Psoas muscle (tissue), 8 donors: ENCODE measurements at regions of chr4 and their contacts with region 1.

Region 1: GRCh38 chr4:146095091-146095690 is 80.3 kb upstream of the LSM6 start:
- DNase-seq: no peak
- ATAC-seq: no peak
- H3K4me3 ChIP-seq: no peak overlapping the region
- H3K27ac ChIP-seq: no peak overlapping the region
- H3K4me1 ChIP-seq: no peaks in the 10 kb centered on the region
- H3K27me3 ChIP-seq: no peaks in the 10 kb centered on the region
- CTCF ChIP-seq: peak; percentile 60

Region 2: DNA sequence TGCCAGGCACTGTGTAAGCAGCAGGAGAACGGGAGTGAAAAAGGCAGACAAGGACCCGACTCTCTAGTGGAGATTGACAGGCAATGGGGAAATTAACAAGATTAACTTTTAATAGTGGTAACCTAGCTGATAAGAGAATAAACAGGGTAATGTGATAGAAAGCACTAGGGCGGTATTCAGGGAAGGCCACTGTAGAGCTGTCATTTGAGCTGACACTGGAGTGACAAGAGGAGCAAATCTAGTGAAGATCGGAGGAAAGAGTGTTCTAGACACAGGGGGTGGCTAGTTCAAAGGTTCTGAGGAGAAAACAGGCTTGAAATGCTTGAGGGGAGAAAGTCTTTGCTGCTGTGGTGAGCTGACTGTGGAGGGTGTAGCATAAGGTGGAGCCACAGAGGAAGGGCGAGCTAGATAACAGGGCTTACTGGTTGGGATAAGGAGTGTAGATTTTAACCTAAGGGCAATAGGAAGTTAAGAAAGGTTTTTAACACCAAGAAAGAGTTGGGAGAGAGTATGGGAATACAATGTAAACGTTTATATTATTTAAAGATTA is 303.8 kb after region 1 on chr4:
- intact Hi-C with region 1: no loop called
- DNase-seq: no peak
- ATAC-seq: no peak
- H3K4me3 ChIP-seq: no peak overlapping the region
- H3K27ac ChIP-seq: no peak overlapping the region
- H3K4me1 ChIP-seq: no peaks in the 10 kb centered on the region
- H3K27me3 ChIP-seq: no peaks in the 10 kb centered on the region
- CTCF ChIP-seq: no peak

Region 3: GRCh38 chr4:146916479-146917076 is 821.4 kb after region 1 on chr4:
- intact Hi-C with region 1: loop called in 1 of 2 experiments (anchors 5 kb)
- DNase-seq: no peak
- ATAC-seq: no peak
- H3K4me3 ChIP-seq: no peak overlapping the region
- H3K27ac ChIP-seq: no peak overlapping the region
- H3K4me1 ChIP-seq: no peaks in the 10 kb centered on the region
- H3K27me3 ChIP-seq: no peaks in the 10 kb centered on the region
- CTCF ChIP-seq: peak; percentile 73